GM13976 (cell line): ENCODE measurements at regions of chr2 and their contacts with region 1.

Region 1: DNA sequence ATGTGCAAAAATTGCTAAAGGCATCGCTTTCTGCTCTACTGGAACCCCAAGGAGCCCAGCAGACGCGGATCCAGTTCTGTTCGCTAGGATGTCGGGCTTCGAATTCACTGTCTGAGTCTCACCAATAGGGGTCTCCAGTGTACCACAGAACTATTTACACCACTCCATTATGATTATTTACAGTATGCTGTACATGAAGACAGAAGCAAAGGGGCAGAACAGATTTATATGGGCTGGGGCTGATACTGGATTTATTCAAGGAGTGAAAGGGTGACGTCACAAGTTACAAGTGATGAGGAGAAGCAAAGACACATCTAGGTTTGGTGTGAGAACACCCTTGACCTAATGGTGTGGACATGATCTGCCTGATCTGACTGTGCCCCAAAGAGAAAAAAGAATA is 185.3 kb upstream of the ATP5MC3 start:
- DNase-seq: peak; percentile 13
- CTCF ChIP-seq: peak; percentile 45

Region 2: DNA sequence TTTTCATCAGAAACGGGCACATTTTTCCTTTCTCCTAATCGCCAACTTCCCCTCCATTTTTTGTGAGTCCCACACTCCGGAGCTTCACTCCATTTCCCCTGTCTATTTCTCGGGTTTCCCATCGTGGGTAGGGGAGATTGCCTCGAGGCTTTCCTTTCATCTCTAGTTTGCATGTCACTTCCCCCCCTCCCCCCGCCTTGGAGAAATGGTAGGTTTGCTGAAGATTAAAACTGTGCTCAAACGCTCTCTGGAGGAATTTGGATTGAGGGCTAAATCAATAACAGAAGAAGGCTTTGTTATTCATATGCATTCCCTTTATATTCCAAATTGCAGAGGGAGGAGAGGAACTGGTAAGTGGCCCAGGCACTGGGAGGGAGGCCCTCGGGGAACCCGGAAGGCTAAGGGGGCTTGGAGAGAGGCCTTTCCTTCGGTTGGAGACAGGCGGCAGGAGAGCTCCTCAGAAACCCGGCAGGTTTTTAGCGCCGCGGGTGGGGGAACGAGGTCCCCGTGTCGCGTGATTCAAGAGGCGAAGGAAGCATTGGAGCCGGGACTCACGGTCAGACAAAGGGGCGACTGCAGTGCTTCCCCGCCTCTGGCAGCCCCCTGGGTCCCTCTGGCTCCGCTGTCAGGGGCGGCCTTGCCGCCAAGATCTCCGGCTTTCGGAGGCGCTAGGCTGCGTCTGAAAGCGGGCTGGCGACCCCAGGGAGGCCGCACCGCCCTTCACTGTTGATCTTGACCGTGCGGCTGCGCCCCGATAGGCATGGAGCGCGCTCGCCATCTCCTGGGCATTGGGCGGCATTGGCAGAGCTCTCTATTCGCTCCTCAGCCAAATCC is 730.4 kb after region 1 on chr2:
- in situ Hi-C with region 1: loop called (anchors 25 kb)
- DNase-seq: peak; percentile 85
- CTCF ChIP-seq: peak; percentile 89